ENCODE measurements at regions of chr6 and their contacts with region 1.

Region 1: GRCh38 chr6:158819213-158819909 is at the start of gene EZR:
- DNase-seq: peak; percentile 89
- ATAC-seq: peak; percentile 67
- H3K4me3 Mint-ChIP-seq: peak within 1 kb of the TSS; percentile 87
- H3K27ac Mint-ChIP-seq: peak within 1 kb of the TSS; percentile 87
- H3K4me1 Mint-ChIP-seq: peaks cover 36% of the 10 kb centered on the region
- H3K27me3 Mint-ChIP-seq: no peaks in the 10 kb centered on the region
- CTCF ChIP-seq: no peak
- total RNA-seq, gene EZR: 199 to 206 TPM

Region 2: GRCh38 chr6:158718461-158719046 is 100.8 kb before region 1 on chr6:
- CTCF ChIA-PET with region 1: no interaction called
- POLR2A ChIA-PET with region 1: no interaction called
- intact Hi-C with region 1: loop called (anchors 5 kb)
- DNase-seq: no peak
- ATAC-seq: no peak
- H3K4me3 Mint-ChIP-seq: no peak overlapping the region
- H3K27ac Mint-ChIP-seq: no peak overlapping the region
- H3K4me1 Mint-ChIP-seq: peaks cover 57% of the 10 kb centered on the region
- H3K27me3 Mint-ChIP-seq: no peaks in the 10 kb centered on the region
- CTCF ChIP-seq: peak; percentile 39

Region 3: DNA sequence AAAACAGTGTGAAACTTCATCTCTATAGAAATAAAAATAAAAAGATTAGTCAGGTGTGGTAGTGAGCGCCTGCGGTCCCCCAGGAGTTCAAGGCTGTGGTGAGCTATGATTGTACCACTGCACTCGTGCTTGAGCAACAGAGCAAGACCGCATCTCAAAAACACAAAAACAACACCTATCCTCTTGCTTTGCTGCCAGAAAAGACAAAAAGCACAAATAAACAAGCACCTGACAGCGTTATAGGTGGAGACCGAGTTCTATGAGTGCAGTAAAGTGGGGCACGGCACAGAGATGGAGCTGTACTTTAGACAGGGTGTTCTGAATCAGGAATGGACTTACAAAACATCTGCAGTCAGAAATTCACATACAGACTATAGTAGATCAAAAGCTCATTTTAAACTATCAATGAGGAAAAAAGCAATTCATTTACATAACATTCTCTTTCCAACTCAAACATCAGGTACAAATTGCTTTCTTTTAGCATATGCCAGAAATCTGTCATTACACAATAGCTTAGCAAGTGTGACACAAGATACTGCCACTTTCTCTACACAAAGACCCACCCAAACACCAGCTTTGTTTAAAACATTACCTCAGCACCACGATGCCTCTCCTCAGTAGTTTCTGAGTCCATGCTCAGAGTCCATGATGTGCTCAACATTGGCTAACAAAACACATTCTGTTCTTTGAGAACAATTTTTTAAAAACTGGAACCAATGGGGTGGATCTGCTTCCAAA is 10.3 kb before region 1 on chr6:
- CTCF ChIA-PET with region 1: interaction called, 7 read pairs
- POLR2A ChIA-PET with region 1: interaction called, 22 read pairs
- intact Hi-C with region 1: no loop called
- DNase-seq: peak; percentile 55
- ATAC-seq: peak; percentile 26
- H3K4me3 Mint-ChIP-seq: no peak overlapping the region
- H3K27ac Mint-ChIP-seq: peak overlapping the region; percentile 77
- H3K4me1 Mint-ChIP-seq: peaks cover 96% of the 10 kb centered on the region
- H3K27me3 Mint-ChIP-seq: no peaks in the 10 kb centered on the region
- CTCF ChIP-seq: no peak

Region 4: DNA sequence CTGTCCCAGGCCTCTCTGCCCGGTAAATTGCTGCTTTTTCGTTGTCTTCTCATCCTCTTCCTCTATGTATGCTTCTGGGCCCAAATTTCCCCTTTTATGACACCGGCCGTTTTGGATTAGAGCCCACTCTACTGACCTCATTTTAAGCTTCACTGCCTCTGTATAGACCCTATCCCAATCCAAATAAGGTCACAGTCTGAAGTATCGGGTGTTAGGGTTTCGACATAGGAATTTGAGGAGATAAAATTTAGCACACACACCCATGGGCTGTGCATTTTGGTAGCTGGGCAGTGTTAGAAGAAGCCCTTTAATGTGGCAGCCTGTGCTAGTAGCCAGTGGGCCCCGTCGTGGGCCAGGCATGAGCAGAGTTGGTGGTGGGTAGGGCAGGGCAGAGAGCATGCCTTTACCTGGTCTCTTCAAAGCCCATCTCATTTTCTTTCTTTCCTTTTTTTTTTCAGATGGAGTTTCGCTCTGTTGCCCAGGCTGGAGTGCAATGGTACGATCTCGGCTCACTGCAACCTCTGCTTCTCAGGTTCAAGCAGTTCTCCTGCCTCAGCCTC is 27.7 kb after region 1 on chr6:
- CTCF ChIA-PET with region 1: interaction called, 4 read pairs
- POLR2A ChIA-PET with region 1: interaction called, 4 read pairs
- intact Hi-C with region 1: loop called (anchors 2 kb)
- DNase-seq: no peak
- ATAC-seq: no peak
- H3K4me3 Mint-ChIP-seq: no peak overlapping the region
- H3K27ac Mint-ChIP-seq: no peak overlapping the region
- H3K4me1 Mint-ChIP-seq: peaks cover 24% of the 10 kb centered on the region
- H3K27me3 Mint-ChIP-seq: no peaks in the 10 kb centered on the region
- CTCF ChIP-seq: no peak

Region 5: GRCh38 chr6:158869826-158870648 is 50.7 kb after region 1 on chr6:
- CTCF ChIA-PET with region 1: interaction called, 9 read pairs
- POLR2A ChIA-PET with region 1: interaction called, 17 read pairs
- intact Hi-C with region 1: loop called (anchors 5 kb)
- DNase-seq: peak; percentile 97
- ATAC-seq: peak; percentile 86
- H3K4me3 Mint-ChIP-seq: peak overlapping the region; percentile 74
- H3K27ac Mint-ChIP-seq: peak overlapping the region; percentile 99
- H3K4me1 Mint-ChIP-seq: peaks cover 35% of the 10 kb centered on the region
- H3K27me3 Mint-ChIP-seq: no peaks in the 10 kb centered on the region
- CTCF ChIP-seq: no peak

Region 6: DNA sequence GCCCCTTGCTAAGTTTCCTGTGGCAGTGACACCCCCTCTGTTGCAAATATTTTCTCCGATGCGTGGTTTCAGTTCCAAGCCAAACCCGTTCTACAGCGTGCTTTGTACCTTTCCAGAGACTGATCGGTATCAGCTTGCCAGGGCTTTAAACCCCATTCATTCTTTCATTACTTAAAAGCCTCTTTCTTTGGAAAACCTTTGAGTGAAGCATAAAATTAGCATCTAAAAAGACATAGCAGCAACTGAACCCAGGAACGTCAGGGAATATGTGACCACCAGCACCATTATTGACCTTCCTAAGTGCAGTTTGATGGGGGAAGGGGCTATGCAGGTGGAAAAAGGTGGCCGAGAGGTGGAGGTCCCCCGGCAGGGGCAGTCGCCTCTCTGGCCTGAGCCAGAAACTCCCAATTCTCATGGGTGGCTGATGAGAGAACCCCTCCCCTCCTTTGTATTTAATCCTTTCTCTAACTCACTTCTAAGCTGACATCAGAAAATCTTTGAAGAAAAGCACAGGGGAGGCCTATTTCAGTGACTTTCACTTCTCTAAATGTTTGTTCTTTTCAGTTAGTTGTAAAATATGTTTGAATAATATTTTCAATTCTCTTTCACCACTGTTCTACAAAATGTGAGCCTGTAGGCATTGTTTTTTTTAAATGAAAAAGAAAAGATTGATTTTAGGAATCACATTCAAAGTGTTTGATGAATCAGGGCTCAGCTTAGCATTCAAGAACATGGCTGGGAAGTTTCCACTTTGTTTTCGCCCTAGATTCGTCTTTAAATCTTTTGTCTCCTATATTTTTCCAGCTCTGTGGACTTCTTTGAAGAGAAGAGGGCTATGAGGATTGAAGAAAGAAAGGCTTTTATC is 91.4 kb after region 1 on chr6:
- CTCF ChIA-PET with region 1: no interaction called
- POLR2A ChIA-PET with region 1: no interaction called
- intact Hi-C with region 1: loop called (anchors 5 kb)
- DNase-seq: peak; percentile 46
- ATAC-seq: peak; percentile 53
- H3K4me3 Mint-ChIP-seq: peak overlapping the region; percentile 56
- H3K27ac Mint-ChIP-seq: peak overlapping the region; percentile 89
- H3K4me1 Mint-ChIP-seq: peaks cover 36% of the 10 kb centered on the region
- H3K27me3 Mint-ChIP-seq: no peaks in the 10 kb centered on the region
- CTCF ChIP-seq: no peak

Measured in activated CD8-positive, alpha-beta T cell treated with anti-CD3 and anti-CD28 coated beads for 36 hours (primary cell).